CD8-positive, alpha-beta T cell (primary cell): ENCODE measurements at regions of chr11 and their contacts with region 1.

Region 1: DNA sequence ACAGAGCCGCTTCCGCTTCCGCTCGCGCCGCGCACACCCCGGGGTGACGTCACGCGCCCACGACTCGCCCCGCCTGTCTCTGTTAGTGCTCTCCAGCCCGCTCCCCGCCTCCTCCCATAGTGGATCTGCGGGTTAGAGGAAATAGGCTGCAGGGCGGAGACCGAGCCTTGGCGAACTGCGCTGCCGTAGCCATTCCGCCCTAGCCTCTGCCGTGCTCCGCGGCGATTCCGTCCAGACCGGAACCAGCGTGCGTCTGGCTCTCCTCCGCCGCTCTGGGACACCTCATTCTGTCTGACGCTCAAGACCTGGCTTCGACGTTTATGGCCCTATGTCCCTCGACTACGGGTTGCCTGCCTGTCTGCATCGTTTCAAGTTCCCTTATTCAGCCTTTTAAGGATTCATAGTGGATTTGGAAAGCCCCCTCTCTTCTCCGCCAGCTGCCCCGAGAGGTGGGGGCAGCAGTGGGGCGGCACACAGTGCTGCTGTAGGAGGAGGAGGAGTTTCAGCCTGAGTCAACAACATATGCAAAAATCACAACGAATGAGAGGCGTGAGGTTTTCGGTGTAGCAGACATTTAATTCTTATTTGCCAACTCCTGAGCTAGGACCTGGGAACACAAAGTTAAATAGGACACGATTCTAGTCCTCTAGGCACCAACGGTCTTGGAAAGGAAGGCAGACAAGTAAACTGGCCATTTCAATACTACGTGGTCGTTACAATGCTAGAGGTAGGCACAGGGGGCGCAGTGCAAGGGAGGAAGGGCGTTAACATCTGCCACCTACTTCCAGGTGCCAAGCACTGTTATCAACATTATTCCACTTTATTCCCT is at the start of gene TAF10:
- DNase-seq: peak; percentile 85 to 98 (median 97)
- ATAC-seq: peak; percentile 89
- H3K4me3 ChIP-seq: peak within 1 kb of the TSS; percentile 78 to 79
- H3K4me3 Mint-ChIP-seq: peak within 1 kb of the TSS; percentile 92
- H3K27ac ChIP-seq: peak within 1 kb of the TSS; percentile 96 to 98
- H3K27ac Mint-ChIP-seq: peak within 1 kb of the TSS; percentile 95
- H3K4me1 ChIP-seq: peaks cover 33% of the 10 kb centered on the region
- H3K4me1 Mint-ChIP-seq: peaks cover 46% of the 10 kb centered on the region
- H3K27me3 ChIP-seq: no peaks in the 10 kb centered on the region
- H3K27me3 Mint-ChIP-seq: no peaks in the 10 kb centered on the region
- CTCF ChIP-seq: peak; percentile 49
- total RNA-seq, gene TAF10: 158 to 161 TPM

Region 2: DNA sequence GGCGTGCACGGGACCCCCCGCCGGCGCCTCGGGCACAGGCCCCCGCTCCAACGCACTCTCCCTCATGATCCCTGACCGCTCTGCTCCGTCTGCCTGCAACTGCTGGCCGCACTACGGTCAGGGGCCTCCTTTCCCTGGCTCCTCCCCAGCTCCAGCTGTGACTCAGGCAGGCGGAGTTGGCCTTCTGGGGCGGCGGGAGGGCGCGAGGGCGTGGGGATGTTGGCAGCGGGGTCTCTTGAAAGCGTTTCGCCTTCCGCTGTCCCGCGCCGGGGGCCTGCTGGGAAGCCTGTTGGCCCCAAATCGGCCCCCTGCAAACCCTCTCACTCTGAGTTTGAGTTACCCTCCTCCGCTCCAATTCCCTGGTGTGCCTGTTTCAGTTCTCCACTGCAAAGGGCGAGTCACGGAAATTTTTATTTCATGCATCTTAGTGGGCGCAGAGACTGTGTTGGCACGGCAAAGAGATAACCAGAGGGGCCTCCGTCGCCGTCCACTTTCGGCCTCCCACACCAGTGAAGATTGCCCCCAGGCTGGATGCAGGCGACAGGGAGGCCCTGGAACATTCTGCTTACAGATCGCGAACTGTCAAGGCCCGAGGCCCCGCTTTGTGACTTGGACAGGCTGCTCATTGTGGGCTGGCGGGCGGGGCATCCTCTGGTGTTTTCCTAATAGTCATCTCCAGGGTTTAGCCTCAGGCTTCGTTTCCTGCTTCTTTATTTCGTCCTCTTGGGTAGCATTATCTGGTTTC is 291.8 kb before region 1 on chr11 and contains the start of gene CAVIN3:
- CTCF ChIA-PET with region 1: no interaction called
- POLR2A ChIA-PET with region 1: no interaction called
- intact Hi-C with region 1: no loop called
- DNase-seq: peak in 1 of 9 experiments; percentile 5
- ATAC-seq: no peak
- H3K4me3 ChIP-seq: no peak within 1 kb of the TSS
- H3K4me3 Mint-ChIP-seq: no peak within 1 kb of the TSS
- H3K27ac ChIP-seq: no peak within 1 kb of the TSS
- H3K27ac Mint-ChIP-seq: no peak within 1 kb of the TSS
- H3K4me1 ChIP-seq: no peaks in the 10 kb centered on the region
- H3K4me1 Mint-ChIP-seq: peaks cover 9% of the 10 kb centered on the region
- H3K27me3 ChIP-seq: peaks cover 5 to 9% of the 10 kb centered on the region in 2 experiments
- H3K27me3 Mint-ChIP-seq: peaks cover 61% of the 10 kb centered on the region
- CTCF ChIP-seq: no peak
- total RNA-seq, gene CAVIN3: not detected

Region 3: DNA sequence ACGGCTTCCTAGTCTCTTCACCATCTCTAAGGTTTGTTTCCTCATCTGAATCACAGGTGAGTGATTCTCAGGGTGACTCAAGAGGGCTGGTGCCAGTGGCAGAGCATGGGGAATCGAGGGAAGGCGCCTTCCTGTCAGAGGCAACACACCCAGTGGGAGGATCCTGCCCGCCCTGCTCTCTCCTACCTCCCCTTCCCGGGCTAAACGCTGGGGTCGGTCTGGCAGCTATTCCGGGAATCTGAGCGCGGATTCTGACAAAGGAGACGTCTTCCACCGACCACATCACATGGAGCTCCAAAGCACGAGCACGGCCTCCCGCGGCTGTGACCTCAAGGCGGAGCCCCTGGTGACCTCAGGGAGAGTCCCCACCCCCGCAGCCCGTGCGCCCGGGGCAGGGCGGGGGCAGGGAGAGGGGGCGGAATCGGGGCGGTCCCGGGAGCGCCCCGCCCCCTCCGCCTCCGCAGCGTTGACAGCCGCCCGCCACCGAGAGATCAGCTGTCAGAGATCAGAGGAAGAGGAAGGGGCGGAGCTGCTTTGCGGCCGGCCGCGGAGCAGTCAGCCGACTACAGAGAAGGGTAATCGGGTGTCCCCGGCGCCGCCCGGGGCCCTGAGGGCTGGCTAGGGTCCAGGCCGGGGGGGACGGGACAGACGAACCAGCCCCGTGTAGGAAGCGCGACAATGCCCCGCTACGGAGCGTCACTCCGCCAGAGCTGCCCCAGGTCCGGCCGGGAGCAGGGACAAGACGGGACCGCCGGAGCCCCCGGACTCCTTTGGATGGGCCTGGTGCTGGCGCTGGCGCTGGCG is 222.3 kb before region 1 on chr11 and contains the start of gene SMPD1:
- CTCF ChIA-PET with region 1: no interaction called
- POLR2A ChIA-PET with region 1: interaction called, 3 read pairs
- intact Hi-C with region 1: loop called (anchors 1 to 5 kb)
- DNase-seq: peak; percentile 90 to 97 (median 94)
- ATAC-seq: peak; percentile 88
- H3K4me3 ChIP-seq: peak within 1 kb of the TSS; percentile 84 to 90
- H3K4me3 Mint-ChIP-seq: peak within 1 kb of the TSS; percentile 93
- H3K27ac ChIP-seq: peak within 1 kb of the TSS; percentile 85 to 95
- H3K27ac Mint-ChIP-seq: peak within 1 kb of the TSS; percentile 98
- H3K4me1 ChIP-seq: peaks cover 52% of the 10 kb centered on the region
- H3K4me1 Mint-ChIP-seq: peaks cover 68% of the 10 kb centered on the region
- H3K27me3 ChIP-seq: no peaks in the 10 kb centered on the region
- H3K27me3 Mint-ChIP-seq: no peaks in the 10 kb centered on the region
- CTCF ChIP-seq: no peak
- total RNA-seq, gene SMPD1: 53.4 to 53.7 TPM

Region 4: GRCh38 chr11:6419009-6419631 is 193.3 kb before region 1 on chr11 and contains the start of gene APBB1:
- CTCF ChIA-PET with region 1: no interaction called
- POLR2A ChIA-PET with region 1: interaction called, 5 read pairs
- intact Hi-C with region 1: loop called (anchors 1 to 2 kb)
- DNase-seq: peak; percentile 49 to 88 (median 77)
- ATAC-seq: peak; percentile 69
- H3K4me3 ChIP-seq: peak within 1 kb of the TSS; percentile 51 to 81
- H3K4me3 Mint-ChIP-seq: peak within 1 kb of the TSS; percentile 84
- H3K27ac ChIP-seq: peak within 1 kb of the TSS; percentile 48 to 82
- H3K27ac Mint-ChIP-seq: peak within 1 kb of the TSS; percentile 89
- H3K4me1 ChIP-seq: peaks cover 46% of the 10 kb centered on the region
- H3K4me1 Mint-ChIP-seq: peaks cover 10% of the 10 kb centered on the region
- H3K27me3 ChIP-seq: no peaks in the 10 kb centered on the region
- H3K27me3 Mint-ChIP-seq: peaks cover 3% of the 10 kb centered on the region
- CTCF ChIP-seq: no peak
- total RNA-seq, gene APBB1: 130 to 147 TPM

Region 5: DNA sequence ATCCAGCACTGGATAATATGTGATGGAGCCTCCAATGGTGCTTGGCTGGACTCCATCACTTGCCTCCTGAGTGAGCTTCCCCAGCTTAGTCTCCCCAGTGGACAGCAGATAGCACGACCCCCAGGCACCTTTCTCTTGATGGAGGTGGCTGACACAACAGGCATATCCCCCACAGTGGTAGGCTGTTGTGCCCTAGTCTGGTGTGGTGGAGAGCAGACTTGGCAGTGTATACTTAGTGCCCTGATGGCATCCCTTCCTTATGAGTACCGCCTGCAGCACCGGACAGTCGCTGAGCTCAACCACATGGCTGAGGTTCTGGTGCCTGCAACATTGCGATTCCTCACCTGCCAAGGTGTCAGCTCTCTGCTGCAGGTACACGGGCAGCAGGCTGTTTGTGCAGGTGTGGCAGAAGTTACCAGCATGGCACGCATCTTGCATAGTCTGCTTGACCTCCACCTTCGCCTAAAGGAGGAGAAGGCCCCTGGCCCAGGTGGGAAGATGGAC is 65.2 kb before region 1 on chr11:
- CTCF ChIA-PET with region 1: no interaction called
- POLR2A ChIA-PET with region 1: no interaction called
- intact Hi-C with region 1: no loop called
- DNase-seq: peak in 1 of 9 experiments; percentile 37
- ATAC-seq: no peak
- H3K4me3 ChIP-seq: no peak overlapping the region
- H3K4me3 Mint-ChIP-seq: no peak overlapping the region
- H3K27ac ChIP-seq: no peak overlapping the region
- H3K27ac Mint-ChIP-seq: no peak overlapping the region
- H3K4me1 ChIP-seq: no peaks in the 10 kb centered on the region
- H3K4me1 Mint-ChIP-seq: peaks cover 9% of the 10 kb centered on the region
- H3K27me3 ChIP-seq: no peaks in the 10 kb centered on the region
- H3K27me3 Mint-ChIP-seq: no peaks in the 10 kb centered on the region
- CTCF ChIP-seq: no peak

Region 6: GRCh38 chr11:6646918-6647679 is 34.7 kb after region 1 on chr11:
- CTCF ChIA-PET with region 1: interaction called, 6 read pairs
- POLR2A ChIA-PET with region 1: interaction called, 13 read pairs
- intact Hi-C with region 1: loop called in 1 of 2 experiments (anchors 10 kb)
- DNase-seq: peak in 8 of 9 experiments; percentile 17 to 76 (median 37)
- ATAC-seq: peak; percentile 61
- H3K4me3 ChIP-seq: peak overlapping the region; percentile 1 to 39
- H3K4me3 Mint-ChIP-seq: no peak overlapping the region
- H3K27ac ChIP-seq: peak overlapping the region; percentile 48 to 80
- H3K27ac Mint-ChIP-seq: no peak overlapping the region
- H3K4me1 ChIP-seq: peaks cover 79% of the 10 kb centered on the region
- H3K4me1 Mint-ChIP-seq: no peaks in the 10 kb centered on the region
- H3K27me3 ChIP-seq: no peaks in the 10 kb centered on the region
- H3K27me3 Mint-ChIP-seq: no peaks in the 10 kb centered on the region
- CTCF ChIP-seq: no peak

Region 7: DNA sequence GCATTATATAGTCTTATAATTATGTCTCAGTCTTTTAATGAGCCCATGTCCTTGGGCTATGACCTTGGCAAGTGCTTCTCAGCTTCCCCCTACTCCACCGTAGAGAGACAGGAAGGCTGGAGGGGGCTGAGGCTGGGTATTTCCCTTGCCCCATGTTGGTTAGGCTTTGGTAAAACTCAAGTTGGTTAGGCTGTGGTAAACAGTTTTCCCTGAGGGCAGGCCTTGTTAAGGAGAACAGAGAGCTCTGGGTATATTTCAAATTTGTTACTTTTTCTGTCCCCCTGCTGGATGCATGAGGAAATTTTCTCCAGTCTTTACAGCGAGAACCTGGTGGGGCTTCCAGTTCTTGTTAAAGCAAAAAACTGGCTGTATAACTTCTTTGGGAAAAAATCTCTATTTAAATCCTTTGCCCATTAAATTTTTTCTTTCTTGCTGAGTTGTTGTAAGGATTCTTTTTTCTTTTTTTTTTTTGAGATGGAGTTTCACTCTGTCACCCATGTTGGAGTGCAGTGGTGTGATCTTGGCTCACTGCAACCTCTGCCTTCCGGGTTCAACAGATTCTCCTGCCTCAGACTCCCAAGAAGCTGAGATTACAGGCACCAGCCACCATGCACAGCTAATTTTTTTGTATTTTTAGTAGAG is 55.4 kb after region 1 on chr11:
- CTCF ChIA-PET with region 1: interaction called, 17 read pairs
- POLR2A ChIA-PET with region 1: interaction called, 27 read pairs
- intact Hi-C with region 1: no loop called
- DNase-seq: peak in 6 of 9 experiments; percentile 16 to 81 (median 50)
- ATAC-seq: peak; percentile 76
- H3K4me3 ChIP-seq: no peak overlapping the region
- H3K4me3 Mint-ChIP-seq: peak overlapping the region; percentile 13
- H3K27ac ChIP-seq: peak overlapping the region in 1 of 2 experiments; percentile 47
- H3K27ac Mint-ChIP-seq: peak overlapping the region; percentile 81
- H3K4me1 ChIP-seq: peaks cover 59% of the 10 kb centered on the region
- H3K4me1 Mint-ChIP-seq: peaks cover 66% of the 10 kb centered on the region
- H3K27me3 ChIP-seq: no peaks in the 10 kb centered on the region
- H3K27me3 Mint-ChIP-seq: no peaks in the 10 kb centered on the region
- CTCF ChIP-seq: peak; percentile 57

Region 8: DNA sequence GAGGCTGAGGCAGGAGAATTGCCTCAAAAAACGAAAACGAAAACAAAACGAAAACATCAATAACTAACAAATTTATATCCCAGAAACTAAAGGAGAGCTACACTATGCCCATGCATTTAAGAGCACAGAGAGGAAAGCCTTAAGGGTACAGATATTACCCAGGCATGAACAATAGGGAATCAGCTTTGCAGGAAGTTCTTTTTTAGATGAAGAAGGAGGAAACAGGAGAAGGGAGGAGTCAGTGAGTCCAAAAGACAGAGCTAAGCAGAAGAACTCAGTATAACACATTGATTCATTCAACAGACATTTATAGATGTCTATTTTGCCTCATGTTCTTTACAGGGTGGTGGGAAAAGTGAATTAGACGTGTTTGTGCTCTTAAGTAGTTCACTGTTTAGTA is 62.4 kb after region 1 on chr11:
- CTCF ChIA-PET with region 1: no interaction called
- POLR2A ChIA-PET with region 1: interaction called, 97 read pairs
- intact Hi-C with region 1: no loop called
- DNase-seq: no peak
- ATAC-seq: no peak
- H3K4me3 ChIP-seq: no peak overlapping the region
- H3K4me3 Mint-ChIP-seq: no peak overlapping the region
- H3K27ac ChIP-seq: no peak overlapping the region
- H3K27ac Mint-ChIP-seq: no peak overlapping the region
- H3K4me1 ChIP-seq: peaks cover 53% of the 10 kb centered on the region
- H3K4me1 Mint-ChIP-seq: peaks cover 54% of the 10 kb centered on the region
- H3K27me3 ChIP-seq: no peaks in the 10 kb centered on the region
- H3K27me3 Mint-ChIP-seq: no peaks in the 10 kb centered on the region
- CTCF ChIP-seq: no peak

Region 9: DNA sequence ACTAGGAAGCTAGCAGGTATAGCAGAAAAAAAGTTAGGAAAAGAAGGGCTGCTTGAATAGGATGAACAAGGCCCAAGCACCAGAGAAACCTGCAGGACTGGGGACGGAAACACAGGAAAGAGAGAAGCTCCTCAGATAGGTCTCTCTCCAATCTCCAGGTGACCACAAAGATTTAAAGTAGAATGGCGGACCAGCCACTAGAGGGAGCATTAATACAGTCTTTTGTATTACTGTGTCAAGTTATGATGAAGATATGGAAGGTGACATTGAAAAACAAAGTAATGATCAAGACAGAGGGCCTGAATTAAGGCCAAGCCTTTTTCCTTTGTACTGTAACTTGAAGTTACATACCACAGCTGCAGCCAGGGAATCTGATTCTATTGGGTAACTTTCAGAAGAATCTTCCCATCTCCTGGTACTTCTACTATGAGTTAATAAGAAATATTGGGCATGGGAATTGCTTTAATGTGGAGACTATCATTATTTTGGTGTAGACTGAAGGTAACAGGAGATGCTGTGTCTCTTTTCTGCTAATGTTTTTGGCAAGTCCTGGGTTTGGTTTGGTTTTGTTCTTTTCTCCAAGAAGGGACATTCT is 125.5 kb after region 1 on chr11:
- CTCF ChIA-PET with region 1: no interaction called
- POLR2A ChIA-PET with region 1: interaction called, 4 read pairs
- intact Hi-C with region 1: loop called in 1 of 2 experiments (anchors 5 kb)
- DNase-seq: peak; percentile 44 to 87 (median 69)
- ATAC-seq: peak; percentile 54
- H3K4me3 ChIP-seq: no peak overlapping the region
- H3K4me3 Mint-ChIP-seq: peak overlapping the region; percentile 9
- H3K27ac ChIP-seq: peak overlapping the region; percentile 1 to 8
- H3K27ac Mint-ChIP-seq: peak overlapping the region; percentile 87
- H3K4me1 ChIP-seq: peaks cover 91% of the 10 kb centered on the region
- H3K4me1 Mint-ChIP-seq: peaks cover 91% of the 10 kb centered on the region
- H3K27me3 ChIP-seq: no peaks in the 10 kb centered on the region
- H3K27me3 Mint-ChIP-seq: no peaks in the 10 kb centered on the region
- CTCF ChIP-seq: peak; percentile 59